ENCODE measurements at regions of chr16 and their contacts with region 1.

Region 1: GRCh38 chr16:68367030-68367429 is 56.2 kb downstream of the PRMT7 start:
- DNase-seq: peak; percentile 82
- H3K4me3 ChIP-seq: no peak overlapping the region
- H3K27ac ChIP-seq: no peak overlapping the region
- H3K4me1 ChIP-seq: peaks cover 22% of the 10 kb centered on the region
- H3K27me3 ChIP-seq: no peaks in the 10 kb centered on the region
- CTCF ChIP-seq: peak; percentile 30 to 53 (median 47)
- POLR2A ChIP-seq: no peak

Region 2: GRCh38 chr16:68517606-68518166 is 150.7 kb after region 1 on chr16:
- intact Hi-C with region 1: loop called (anchors 10 kb)
- DNase-seq: no peak
- H3K4me3 ChIP-seq: no peak overlapping the region
- H3K27ac ChIP-seq: no peak overlapping the region
- H3K4me1 ChIP-seq: no peaks in the 10 kb centered on the region
- H3K27me3 ChIP-seq: no peaks in the 10 kb centered on the region
- CTCF ChIP-seq: no peak
- POLR2A ChIP-seq: no peak